Heart right ventricle (tissue), 16 donors: ENCODE measurements at regions of chr17 and their contacts with region 1.

Region 1: DNA sequence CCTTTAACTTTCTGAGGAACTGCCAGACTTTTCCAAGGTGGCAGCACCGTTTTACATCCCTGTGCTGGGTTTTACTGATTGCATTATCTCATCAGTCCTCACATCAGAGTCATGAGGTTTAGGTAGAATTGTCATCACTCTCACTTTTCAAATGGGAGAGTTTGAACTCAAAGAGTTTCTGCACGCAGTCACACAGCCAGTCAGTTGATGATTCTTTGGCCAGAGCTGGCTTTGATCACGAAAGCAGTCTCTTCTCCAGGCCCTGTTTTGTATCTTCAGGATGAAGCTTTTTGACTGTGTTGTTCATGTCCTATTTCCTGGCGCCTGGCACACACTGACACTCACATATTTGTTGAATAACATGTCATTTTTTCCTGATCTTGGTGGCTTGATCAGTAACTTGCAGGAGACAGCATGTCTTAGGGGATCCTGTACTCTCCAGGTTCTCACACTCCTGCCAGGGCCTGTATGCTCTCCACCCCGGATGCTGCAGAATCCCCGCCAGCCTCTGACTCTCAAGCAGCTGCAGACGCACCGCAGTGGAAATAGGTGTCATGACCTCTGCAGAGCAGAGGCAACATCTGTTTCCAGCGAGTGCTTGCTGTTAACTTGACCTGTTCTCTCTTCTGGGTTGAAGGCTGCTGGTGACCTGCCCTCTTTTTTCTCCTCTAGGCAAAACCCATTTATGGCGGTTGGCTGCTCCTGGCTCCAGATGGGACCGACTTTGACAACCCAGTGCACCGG is 33.0 kb downstream of the MPRIP start:
- DNase-seq: peak; percentile 50 to 72
- ATAC-seq: peak; percentile 35 to 71 (median 43)
- H3K4me3 ChIP-seq: no peak overlapping the region
- H3K27ac ChIP-seq: peak overlapping the region in 8 of 10 donors; percentile 0 to 74 (median 36)
- H3K4me1 ChIP-seq: peaks cover 64 to 100% (median 83%) of the 10 kb centered on the region in 9 donors
- H3K27me3 ChIP-seq: no peaks in the 10 kb centered on the region
- CTCF ChIP-seq: no peak

Region 2: DNA sequence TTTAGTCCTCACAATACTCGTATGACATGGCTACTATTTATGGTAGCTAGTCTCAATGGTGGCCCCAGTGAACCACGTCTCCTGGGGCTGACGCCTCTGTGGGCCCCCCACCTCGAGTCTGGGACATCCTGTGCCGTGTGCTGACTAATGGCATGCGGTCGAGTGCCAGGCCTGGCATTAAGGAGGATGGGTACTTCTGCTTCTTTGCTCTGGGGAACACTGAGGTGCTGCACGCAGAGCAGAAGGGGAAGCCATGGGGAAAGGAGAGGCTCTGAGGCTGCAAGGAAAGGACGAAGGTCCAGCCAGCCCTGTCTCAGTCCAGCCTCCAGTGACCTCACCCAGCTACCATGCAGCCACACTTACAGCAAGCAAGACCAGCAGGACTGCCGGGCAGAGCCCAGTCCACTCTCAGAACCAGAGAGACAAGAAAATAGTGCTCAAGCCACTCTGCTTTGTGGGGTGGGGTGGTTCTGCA is 38.6 kb before region 1 on chr17:
- intact Hi-C with region 1: loop called in 1 of 10 experiments (anchors 2 kb)
- DNase-seq: no peak
- ATAC-seq: peak in 7 of 8 donors; percentile 18 to 89 (median 74)
- H3K4me3 ChIP-seq: no peak overlapping the region
- H3K27ac ChIP-seq: peak overlapping the region; percentile 2 to 76 (median 49)
- H3K4me1 ChIP-seq: peaks cover 7 to 46% (median 29%) of the 10 kb centered on the region in 9 donors
- H3K27me3 ChIP-seq: no peaks in the 10 kb centered on the region
- CTCF ChIP-seq: no peak

Region 3: GRCh38 chr17:17132746-17133145 is 57.5 kb after region 1 on chr17:
- intact Hi-C with region 1: loop called in 1 of 10 experiments (anchors 5 kb)
- DNase-seq: no peak
- ATAC-seq: no peak
- H3K4me3 ChIP-seq: no peak overlapping the region
- H3K27ac ChIP-seq: no peak overlapping the region
- H3K4me1 ChIP-seq: peaks cover 0 to 52% (median 16%) of the 10 kb centered on the region in 9 donors
- H3K27me3 ChIP-seq: no peaks in the 10 kb centered on the region
- CTCF ChIP-seq: no peak